ENCODE measurements at regions of chr12 and their contacts with region 1.

Region 1: GRCh38 chr12:49623142-49623904 is at the start of gene PRPF40B:
- DNase-seq: peak; percentile 70 to 93 (median 84)
- ATAC-seq: peak; percentile 76
- H3K4me3 ChIP-seq: peak within 1 kb of the TSS; percentile 70
- H3K4me3 Mint-ChIP-seq: peak within 1 kb of the TSS; percentile 92
- H3K27ac ChIP-seq: peak within 1 kb of the TSS; percentile 58 to 66
- H3K27ac Mint-ChIP-seq: peak within 1 kb of the TSS; percentile 92
- H3K4me1 ChIP-seq: peaks cover 29% of the 10 kb centered on the region
- H3K4me1 Mint-ChIP-seq: peaks cover 30% of the 10 kb centered on the region
- H3K27me3 ChIP-seq: no peaks in the 10 kb centered on the region
- H3K27me3 Mint-ChIP-seq: peaks cover 6% of the 10 kb centered on the region
- CTCF ChIP-seq: peak; percentile 23
- total RNA-seq, gene PRPF40B: 4.7 to 6.5 TPM

Region 2: DNA sequence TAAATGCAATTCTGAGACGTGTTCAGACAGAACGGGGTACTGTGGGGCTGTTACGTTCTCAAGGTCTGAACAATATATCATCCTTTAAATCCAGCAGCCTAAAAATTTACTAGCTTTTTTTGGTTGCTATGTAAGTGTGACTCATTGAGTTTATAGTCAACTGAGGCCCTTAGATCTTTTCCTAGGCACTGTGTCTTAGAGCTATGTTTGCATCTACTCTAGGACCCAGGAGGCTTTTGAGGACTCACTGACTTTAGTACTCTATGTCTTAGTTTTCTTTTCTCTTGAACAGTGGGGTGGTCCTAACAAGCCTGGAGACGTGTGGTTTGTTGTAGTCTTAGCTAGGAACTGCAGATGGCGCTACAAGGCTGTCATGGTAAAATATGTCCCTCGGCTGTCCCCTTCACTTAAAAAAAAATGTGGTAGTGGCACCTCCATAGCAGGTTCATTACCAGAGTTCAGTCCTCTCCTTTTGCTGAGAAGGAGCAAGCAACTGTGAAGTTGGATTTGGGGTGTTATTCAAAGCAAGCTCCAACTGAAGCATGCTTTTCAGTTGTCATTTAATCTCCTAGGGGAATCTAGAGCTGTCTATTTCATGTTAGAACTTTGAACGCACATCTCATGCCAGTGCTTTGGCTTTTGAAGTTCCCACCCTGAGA is 264.7 kb before region 1 on chr12:
- CTCF ChIA-PET with region 1: interaction called, 3 read pairs
- POLR2A ChIA-PET with region 1: no interaction called
- intact Hi-C with region 1: loop called in 1 of 2 experiments (anchors 5 kb)
- DNase-seq: peak in 8 of 14 experiments; percentile 31 to 86 (median 62)
- ATAC-seq: peak; percentile 96
- H3K4me3 ChIP-seq: no peak overlapping the region
- H3K4me3 Mint-ChIP-seq: peak overlapping the region; percentile 34
- H3K27ac ChIP-seq: no peak overlapping the region
- H3K27ac Mint-ChIP-seq: no peak overlapping the region
- H3K4me1 ChIP-seq: peaks cover 3% of the 10 kb centered on the region
- H3K4me1 Mint-ChIP-seq: peaks cover 7% of the 10 kb centered on the region
- H3K27me3 ChIP-seq: peaks cover 9 to 12% of the 10 kb centered on the region in 2 experiments
- H3K27me3 Mint-ChIP-seq: peaks cover 29% of the 10 kb centered on the region
- CTCF ChIP-seq: peak; percentile 78

Region 3: GRCh38 chr12:49553512-49554088 is 69.7 kb before region 1 on chr12:
- CTCF ChIA-PET with region 1: interaction called, 3 read pairs
- POLR2A ChIA-PET with region 1: interaction called, 6 read pairs
- intact Hi-C with region 1: loop called (anchors 2 to 5 kb)
- DNase-seq: peak in 4 of 14 experiments; percentile 33 to 74 (median 66)
- ATAC-seq: peak; percentile 81
- H3K4me3 ChIP-seq: no peak overlapping the region
- H3K4me3 Mint-ChIP-seq: no peak overlapping the region
- H3K27ac ChIP-seq: no peak overlapping the region
- H3K27ac Mint-ChIP-seq: no peak overlapping the region
- H3K4me1 ChIP-seq: peaks cover 16% of the 10 kb centered on the region
- H3K4me1 Mint-ChIP-seq: peaks cover 7% of the 10 kb centered on the region
- H3K27me3 ChIP-seq: peaks cover 4 to 14% of the 10 kb centered on the region in 2 experiments
- H3K27me3 Mint-ChIP-seq: peaks cover 9% of the 10 kb centered on the region
- CTCF ChIP-seq: peak; percentile 73

Region 4: GRCh38 chr12:49580572-49581535 is 42.5 kb before region 1 on chr12:
- CTCF ChIA-PET with region 1: interaction called, 9 read pairs
- POLR2A ChIA-PET with region 1: interaction called, 6 read pairs
- intact Hi-C with region 1: loop called (anchors 2 to 5 kb)
- DNase-seq: peak; percentile 24 to 73 (median 46)
- ATAC-seq: peak; percentile 84
- H3K4me3 ChIP-seq: no peak overlapping the region
- H3K4me3 Mint-ChIP-seq: no peak overlapping the region
- H3K27ac ChIP-seq: no peak overlapping the region
- H3K27ac Mint-ChIP-seq: no peak overlapping the region
- H3K4me1 ChIP-seq: peaks cover 9% of the 10 kb centered on the region
- H3K4me1 Mint-ChIP-seq: peaks cover 6% of the 10 kb centered on the region
- H3K27me3 ChIP-seq: no peaks in the 10 kb centered on the region
- H3K27me3 Mint-ChIP-seq: no peaks in the 10 kb centered on the region
- CTCF ChIP-seq: peak; percentile 66

Region 5: GRCh38 chr12:49707128-49707811 is 83.9 kb after region 1 on chr12 and contains the start of gene FMNL3:
- CTCF ChIA-PET with region 1: interaction called, 10 read pairs
- POLR2A ChIA-PET with region 1: interaction called, 9 read pairs
- intact Hi-C with region 1: no loop called
- DNase-seq: peak; percentile 97 to 100 (median 99)
- ATAC-seq: peak; percentile 95
- H3K4me3 ChIP-seq: peak within 1 kb of the TSS; percentile 85
- H3K4me3 Mint-ChIP-seq: peak within 1 kb of the TSS; percentile 94
- H3K27ac ChIP-seq: peak within 1 kb of the TSS; percentile 39 to 82
- H3K27ac Mint-ChIP-seq: peak within 1 kb of the TSS; percentile 78
- H3K4me1 ChIP-seq: peaks cover 42% of the 10 kb centered on the region
- H3K4me1 Mint-ChIP-seq: peaks cover 45% of the 10 kb centered on the region
- H3K27me3 ChIP-seq: no peaks in the 10 kb centered on the region
- H3K27me3 Mint-ChIP-seq: peaks cover 4% of the 10 kb centered on the region
- CTCF ChIP-seq: peak; percentile 93
- total RNA-seq, gene FMNL3: 33.3 to 34.8 TPM

Region 6: GRCh38 chr12:49842519-49843352 is 219.4 kb after region 1 on chr12 and contains the start of gene BCDIN3D:
- CTCF ChIA-PET with region 1: interaction called, 4 read pairs
- POLR2A ChIA-PET with region 1: interaction called, 8 read pairs
- intact Hi-C with region 1: loop called in 1 of 2 experiments (anchors 5 kb)
- DNase-seq: peak; percentile 86 to 97 (median 90)
- ATAC-seq: peak; percentile 90
- H3K4me3 ChIP-seq: peak within 1 kb of the TSS; percentile 83
- H3K4me3 Mint-ChIP-seq: peak within 1 kb of the TSS; percentile 90
- H3K27ac ChIP-seq: peak within 1 kb of the TSS; percentile 80 to 85
- H3K27ac Mint-ChIP-seq: peak within 1 kb of the TSS; percentile 88
- H3K4me1 ChIP-seq: peaks cover 34% of the 10 kb centered on the region
- H3K4me1 Mint-ChIP-seq: peaks cover 43% of the 10 kb centered on the region
- H3K27me3 ChIP-seq: no peaks in the 10 kb centered on the region
- H3K27me3 Mint-ChIP-seq: no peaks in the 10 kb centered on the region
- CTCF ChIP-seq: no peak
- total RNA-seq, gene BCDIN3D: 2.8 to 3.9 TPM

Measured in CD4-positive, alpha-beta T cell (primary cell).